Endothelial cell of umbilical vein (primary cell): ENCODE measurements at regions of chr7 and their contacts with region 1.

Region 1: DNA sequence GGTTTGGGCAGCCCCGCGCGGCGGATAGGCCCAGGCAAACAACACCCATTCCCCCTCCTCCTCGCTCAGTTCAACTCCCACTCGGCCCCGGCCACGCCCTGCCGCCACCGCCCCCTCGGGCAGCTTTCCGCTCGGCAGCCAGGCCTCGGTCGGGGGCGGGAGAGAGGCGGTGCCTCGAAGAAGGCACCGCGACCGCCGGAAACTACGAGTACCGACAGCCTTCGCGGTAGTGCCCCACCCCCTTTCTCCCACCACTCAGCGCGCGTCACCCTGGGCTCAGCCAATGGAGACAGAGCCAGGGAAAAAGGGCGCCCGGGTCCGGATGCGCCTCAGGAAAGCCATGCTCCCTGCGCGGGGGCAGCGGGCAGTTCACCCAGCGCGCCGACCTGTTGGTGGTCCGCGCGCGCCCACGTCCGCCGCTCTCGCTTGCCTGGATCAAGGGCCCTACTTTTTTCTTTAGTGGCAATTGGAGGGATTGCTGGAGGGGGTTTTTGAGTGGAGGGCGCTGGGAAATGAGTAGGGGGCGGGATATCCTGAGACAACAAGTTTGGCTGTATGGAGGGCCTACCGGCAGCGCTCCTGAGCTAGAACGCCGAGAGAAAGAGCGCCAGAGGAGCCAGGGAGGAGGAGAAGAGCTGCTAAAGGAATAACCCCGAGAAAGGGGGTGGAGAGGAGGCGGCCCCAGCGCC is 557 bp upstream of the SP4 start:
- DNase-seq: peak; percentile 99
- H3K4me3 ChIP-seq: peak overlapping the region; percentile 54 to 65 (median 55)
- H3K27ac ChIP-seq: peak overlapping the region; percentile 89
- H3K4me1 ChIP-seq: peaks cover 17% of the 10 kb centered on the region
- H3K27me3 ChIP-seq: no peaks in the 10 kb centered on the region
- CTCF ChIP-seq: no peak
- POLR2A ChIP-seq: peak; percentile 59

Region 2: GRCh38 chr7:20330240-20330927 is 1096.9 kb before region 1 on chr7 and contains the start of gene ITGB8:
- CTCF ChIA-PET with region 1: no interaction called
- POLR2A ChIA-PET with region 1: no interaction called
- dilution Hi-C with region 1: no loop called
- intact Hi-C with region 1: loop called (anchors 5 kb)
- DNase-seq: peak; percentile 90
- H3K4me3 ChIP-seq: peak within 1 kb of the TSS; percentile 51 to 62 (median 53)
- H3K27ac ChIP-seq: peak within 1 kb of the TSS; percentile 87
- H3K4me1 ChIP-seq: peaks cover 14% of the 10 kb centered on the region
- H3K27me3 ChIP-seq: no peaks in the 10 kb centered on the region
- CTCF ChIP-seq: no peak
- POLR2A ChIP-seq: no peak
- total RNA-seq, gene ITGB8: 6.5 and 8.2 TPM in 2 replicates

Region 3: DNA sequence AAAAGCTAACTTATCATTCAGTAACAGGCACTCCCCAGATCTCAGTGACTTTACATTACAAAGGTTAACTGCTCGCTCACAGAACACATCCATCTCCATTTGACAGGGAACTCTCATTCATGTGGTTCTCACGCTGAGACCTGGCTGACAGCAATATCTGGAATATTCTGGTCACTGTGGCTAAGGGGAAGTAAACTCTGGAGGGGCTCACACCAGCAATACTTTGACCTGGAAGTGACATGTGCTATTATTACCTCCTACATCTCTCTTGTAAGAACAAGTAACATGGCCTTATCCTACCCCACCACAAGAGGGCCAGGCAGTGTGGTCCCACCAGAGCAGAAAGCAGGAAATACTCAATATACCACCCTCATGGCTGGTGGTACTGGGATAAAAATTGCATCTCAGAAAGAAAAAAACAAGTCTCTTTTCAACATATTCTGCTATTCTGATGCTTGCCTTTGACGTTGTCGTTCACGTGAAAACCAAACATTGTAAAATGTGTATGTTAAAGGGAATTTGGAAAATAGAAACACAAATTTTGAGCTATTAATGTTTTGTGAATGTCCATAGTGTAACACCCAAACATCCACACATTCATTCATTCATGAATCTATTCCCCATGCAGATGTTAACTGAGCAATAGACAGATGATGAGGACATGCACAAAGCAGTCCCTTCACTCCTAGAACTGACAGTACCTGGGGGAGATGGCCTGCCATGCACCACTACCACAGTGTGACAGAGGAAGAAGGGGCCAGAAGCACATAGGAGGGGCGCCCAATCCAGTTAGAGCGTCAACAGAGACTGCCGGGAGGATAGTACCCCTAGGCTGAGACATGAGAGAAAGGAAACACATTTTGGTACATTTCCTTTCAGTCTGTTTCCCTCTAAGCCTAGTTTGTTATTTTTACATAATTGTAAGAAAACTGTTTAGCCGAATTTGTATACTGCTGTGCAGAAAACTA is 165.4 kb before region 1 on chr7:
- CTCF ChIA-PET with region 1: interaction called, 21 read pairs
- POLR2A ChIA-PET with region 1: interaction called, 3 read pairs
- dilution Hi-C with region 1: no loop called
- intact Hi-C with region 1: loop called (anchors 1 kb)
- DNase-seq: peak; percentile 67
- H3K4me3 ChIP-seq: no peak overlapping the region
- H3K27ac ChIP-seq: no peak overlapping the region
- H3K4me1 ChIP-seq: peaks cover 2% of the 10 kb centered on the region
- H3K27me3 ChIP-seq: no peaks in the 10 kb centered on the region
- CTCF ChIP-seq: peak; percentile 67 to 68
- POLR2A ChIP-seq: no peak

Region 4: DNA sequence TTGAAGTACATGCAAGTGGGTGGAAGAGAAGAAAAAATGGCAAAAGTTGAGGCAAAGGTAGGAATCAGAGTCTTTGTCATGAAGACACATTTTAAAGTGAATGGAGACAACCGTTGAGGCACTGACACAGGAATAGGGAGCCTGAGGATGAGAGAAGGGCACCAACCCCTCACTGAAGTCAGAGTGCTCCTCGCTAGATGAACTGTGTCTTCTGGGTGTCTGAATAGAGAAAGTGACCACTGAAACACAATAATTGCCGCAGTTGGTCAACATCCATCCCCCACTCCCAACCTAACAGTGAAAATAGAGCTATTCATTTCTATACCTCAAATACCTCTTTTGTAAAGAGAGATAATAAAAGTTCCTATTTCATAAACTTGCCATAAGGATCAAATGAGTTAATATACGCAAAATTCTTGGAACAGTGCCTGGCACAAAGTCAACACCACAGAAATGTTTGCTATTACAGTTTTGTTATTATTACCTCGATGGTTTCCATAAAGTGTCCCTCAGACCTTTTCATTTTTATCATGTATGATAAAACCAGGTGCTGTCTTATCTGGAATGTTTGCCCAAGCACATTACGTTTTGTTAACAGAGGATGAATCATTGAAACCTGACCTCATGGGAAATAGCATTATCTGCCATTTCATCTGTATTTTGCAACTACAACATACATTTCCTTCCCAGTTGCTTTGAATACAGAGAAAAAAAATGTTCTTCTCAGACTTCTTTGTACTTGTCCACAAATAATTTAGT is 61.3 kb before region 1 on chr7:
- CTCF ChIA-PET with region 1: no interaction called
- POLR2A ChIA-PET with region 1: no interaction called
- dilution Hi-C with region 1: no loop called
- intact Hi-C with region 1: loop called (anchors 1 kb)
- DNase-seq: peak; percentile 92
- H3K4me3 ChIP-seq: no peak overlapping the region
- H3K27ac ChIP-seq: peak overlapping the region; percentile 83
- H3K4me1 ChIP-seq: peaks cover 17% of the 10 kb centered on the region
- H3K27me3 ChIP-seq: no peaks in the 10 kb centered on the region
- CTCF ChIP-seq: no peak
- POLR2A ChIP-seq: no peak

Region 5: GRCh38 chr7:21767300-21767900 is 340.1 kb after region 1 on chr7:
- CTCF ChIA-PET with region 1: no interaction called
- POLR2A ChIA-PET with region 1: no interaction called
- dilution Hi-C with region 1: no loop called
- intact Hi-C with region 1: loop called (anchors 1 kb)
- DNase-seq: peak; percentile 60
- H3K4me3 ChIP-seq: no peak overlapping the region
- H3K27ac ChIP-seq: no peak overlapping the region
- H3K4me1 ChIP-seq: no peaks in the 10 kb centered on the region
- H3K27me3 ChIP-seq: peaks cover 8% of the 10 kb centered on the region in 2 experiments
- CTCF ChIP-seq: peak; percentile 42 to 47
- POLR2A ChIP-seq: no peak